ENCODE measurements at regions of chr12 and their contacts with region 1.

Region 1: DNA sequence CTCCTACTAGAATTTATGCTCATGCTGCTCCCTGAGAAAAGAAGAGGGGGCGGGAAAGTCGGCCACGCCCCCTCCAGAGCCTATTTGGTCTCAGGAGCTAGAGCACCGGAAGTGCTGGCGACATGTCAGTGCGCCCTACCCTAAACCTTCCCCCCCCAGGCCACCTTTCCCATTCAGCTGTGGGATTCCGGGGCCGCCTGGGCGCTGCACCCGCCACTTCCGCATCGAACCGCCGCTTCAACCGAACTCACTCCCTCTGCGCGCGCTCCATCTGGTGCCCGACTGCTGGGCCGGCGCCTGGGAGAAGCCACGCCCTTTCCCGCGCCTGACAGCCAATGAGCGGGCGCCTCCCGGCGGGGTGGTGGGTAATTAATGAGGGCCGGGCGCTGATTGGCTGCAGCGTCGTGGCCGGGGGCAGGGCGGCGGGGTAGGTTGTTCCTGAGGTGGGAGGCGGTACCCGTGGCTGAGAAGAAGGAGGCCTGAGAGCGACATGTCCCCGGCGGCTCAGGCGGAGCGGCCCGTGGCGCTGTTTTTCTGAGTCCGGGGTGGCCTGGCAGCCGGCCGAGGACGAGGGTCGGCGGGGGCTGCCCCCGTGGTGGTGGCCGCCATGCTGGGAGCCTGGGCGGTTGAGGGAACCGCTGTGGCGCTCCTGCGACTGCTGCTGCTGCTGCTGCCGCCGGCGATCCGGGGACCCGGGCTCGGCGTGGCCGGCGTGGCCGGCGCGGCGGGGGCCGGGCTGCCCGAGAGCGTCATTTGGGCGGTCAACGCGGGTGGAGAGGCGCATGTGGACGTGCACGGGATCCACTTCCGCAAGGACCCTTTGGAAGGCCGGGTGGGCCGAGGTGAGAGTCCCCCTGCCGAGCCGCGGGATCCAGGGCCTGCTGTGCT is at the start of gene MLEC:
- DNase-seq: peak; percentile 100
- H3K4me3 Mint-ChIP-seq: peak within 1 kb of the TSS; percentile 88
- H3K27ac Mint-ChIP-seq: peak within 1 kb of the TSS; percentile 86
- H3K4me1 Mint-ChIP-seq: peaks cover 48% of the 10 kb centered on the region
- H3K27me3 Mint-ChIP-seq: no peaks in the 10 kb centered on the region
- total RNA-seq, gene MLEC: 139 and 150 TPM in 2 replicates

Region 2: DNA sequence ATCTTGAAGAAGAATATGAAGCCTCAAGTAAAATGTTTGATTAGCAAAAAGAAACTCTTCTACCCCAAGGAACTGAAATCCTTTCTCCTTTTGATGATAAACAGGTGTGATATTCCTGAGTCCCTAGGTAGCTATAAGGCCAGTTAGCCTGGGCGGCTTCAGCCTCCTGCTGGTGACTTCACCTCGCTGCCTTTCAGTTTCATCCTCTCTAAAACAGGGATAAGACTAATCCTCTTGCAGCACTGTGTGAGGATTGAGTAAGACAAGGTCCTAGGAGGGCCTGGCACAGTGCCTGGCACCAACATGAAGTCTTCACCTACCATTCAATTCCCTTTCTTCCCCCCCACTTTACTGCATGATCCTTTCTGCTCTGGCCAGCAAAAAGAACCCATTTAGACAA is 851.9 kb before region 1 on chr12:
- intact Hi-C with region 1: no loop called
- DNase-seq: no peak
- H3K4me3 Mint-ChIP-seq: no peak overlapping the region
- H3K27ac Mint-ChIP-seq: no peak overlapping the region
- H3K4me1 Mint-ChIP-seq: peaks cover 5% of the 10 kb centered on the region
- H3K27me3 Mint-ChIP-seq: no peaks in the 10 kb centered on the region

Region 3: GRCh38 chr12:120327593-120327992 is 359.3 kb before region 1 on chr12 and contains the start of gene PLA2G1B:
- intact Hi-C with region 1: loop called (anchors 2 kb)
- DNase-seq: no peak
- H3K4me3 Mint-ChIP-seq: peak within 1 kb of the TSS; percentile 7
- H3K27ac Mint-ChIP-seq: no peak within 1 kb of the TSS
- H3K4me1 Mint-ChIP-seq: peaks cover 11% of the 10 kb centered on the region
- H3K27me3 Mint-ChIP-seq: peaks cover 17% of the 10 kb centered on the region
- total RNA-seq, gene PLA2G1B: not detected in 2 replicates

Region 4: GRCh38 chr12:120534203-120534702 is 152.7 kb before region 1 on chr12 and contains the start of gene RNF10:
- intact Hi-C with region 1: loop called (anchors 2 kb)
- DNase-seq: peak; percentile 79
- H3K4me3 Mint-ChIP-seq: peak within 1 kb of the TSS; percentile 96
- H3K27ac Mint-ChIP-seq: peak within 1 kb of the TSS; percentile 94
- H3K4me1 Mint-ChIP-seq: peaks cover 53% of the 10 kb centered on the region
- H3K27me3 Mint-ChIP-seq: no peaks in the 10 kb centered on the region
- total RNA-seq, gene RNF10: 170 and 181 TPM in 2 replicates

Region 5: GRCh38 chr12:120710031-120710804 is 23.3 kb after region 1 on chr12 and contains the start of gene UNC119B:
- intact Hi-C with region 1: loop called (anchors 1 kb)
- DNase-seq: peak; percentile 71
- H3K4me3 Mint-ChIP-seq: peak within 1 kb of the TSS; percentile 91
- H3K27ac Mint-ChIP-seq: peak within 1 kb of the TSS; percentile 89
- H3K4me1 Mint-ChIP-seq: peaks cover 37% of the 10 kb centered on the region
- H3K27me3 Mint-ChIP-seq: no peaks in the 10 kb centered on the region
- total RNA-seq, gene UNC119B: 24.2 and 24.6 TPM in 2 replicates

Region 6: GRCh38 chr12:120971299-120972179 is 284.6 kb after region 1 on chr12:
- intact Hi-C with region 1: loop called (anchors 1 kb)
- DNase-seq: peak; percentile 17
- H3K4me3 Mint-ChIP-seq: no peak overlapping the region
- H3K27ac Mint-ChIP-seq: no peak overlapping the region
- H3K4me1 Mint-ChIP-seq: peaks cover 7% of the 10 kb centered on the region
- H3K27me3 Mint-ChIP-seq: peaks cover 8% of the 10 kb centered on the region

Region 7: GRCh38 chr12:121296618-121297434 is 609.9 kb after region 1 on chr12 and contains the start of gene CAMKK2:
- intact Hi-C with region 1: loop called (anchors 2 kb)
- DNase-seq: peak; percentile 91
- H3K4me3 Mint-ChIP-seq: peak within 1 kb of the TSS; percentile 94
- H3K27ac Mint-ChIP-seq: peak within 1 kb of the TSS; percentile 88
- H3K4me1 Mint-ChIP-seq: peaks cover 35% of the 10 kb centered on the region
- H3K27me3 Mint-ChIP-seq: no peaks in the 10 kb centered on the region
- total RNA-seq, gene CAMKK2: 38.1 and 41.0 TPM in 2 replicates